ENCODE measurements at regions of chr1 and their contacts with region 1.

Region 1: GRCh38 chr1:116987256-116987555 is 14.4 kb upstream of the CD101 start:
- DNase-seq: peak; percentile 62 to 68
- H3K4me3 ChIP-seq: peak overlapping the region; percentile 40
- H3K4me3 Mint-ChIP-seq: peak overlapping the region; percentile 98
- H3K27ac Mint-ChIP-seq: peak overlapping the region; percentile 97
- H3K4me1 ChIP-seq: peaks cover 15% of the 10 kb centered on the region
- H3K4me1 Mint-ChIP-seq: peaks cover 6% of the 10 kb centered on the region
- H3K27me3 ChIP-seq: no peaks in the 10 kb centered on the region
- H3K27me3 Mint-ChIP-seq: no peaks in the 10 kb centered on the region
- CTCF ChIP-seq: no peak

Region 2: DNA sequence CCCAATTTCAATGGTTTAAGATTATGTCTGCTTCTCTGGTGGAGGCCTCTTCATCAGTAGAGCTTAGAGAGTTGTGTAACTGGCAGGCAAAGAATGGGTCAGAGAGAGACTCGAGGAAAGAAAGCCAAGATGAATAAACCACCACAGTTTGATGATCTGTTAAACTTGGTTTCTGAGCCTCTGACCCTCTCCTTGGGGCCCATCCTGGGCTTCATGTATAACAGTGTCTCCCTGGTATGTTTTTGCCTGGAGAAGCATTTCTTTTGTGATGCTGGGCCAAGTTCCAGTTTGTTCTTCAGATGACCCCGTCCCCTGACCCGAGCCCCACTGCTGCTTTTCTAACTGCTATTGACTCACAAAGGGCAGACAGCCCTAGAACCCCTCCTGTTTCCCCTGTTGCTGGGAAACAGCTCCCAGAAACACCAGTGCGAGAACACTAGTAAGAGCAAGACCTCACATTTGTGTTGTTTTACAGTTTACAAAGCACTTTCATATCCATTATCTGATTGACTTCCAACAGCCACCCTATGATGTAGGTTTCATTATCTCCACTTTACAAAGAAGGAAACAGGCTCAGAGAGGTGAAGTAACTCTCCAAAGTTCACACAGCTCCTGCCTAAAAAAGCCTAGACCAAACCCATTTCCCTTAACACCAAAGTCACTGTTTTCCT is 224.0 kb before region 1 on chr1:
- CTCF ChIA-PET with region 1: no interaction called
- POLR2A ChIA-PET with region 1: no interaction called
- intact Hi-C with region 1: no loop called
- DNase-seq: no peak
- H3K4me3 ChIP-seq: no peak overlapping the region
- H3K4me3 Mint-ChIP-seq: no peak overlapping the region
- H3K27ac Mint-ChIP-seq: no peak overlapping the region
- H3K4me1 ChIP-seq: no peaks in the 10 kb centered on the region
- H3K4me1 Mint-ChIP-seq: no peaks in the 10 kb centered on the region
- H3K27me3 ChIP-seq: no peaks in the 10 kb centered on the region
- H3K27me3 Mint-ChIP-seq: no peaks in the 10 kb centered on the region
- CTCF ChIP-seq: no peak

Region 3: GRCh38 chr1:116873680-116874271 is 113.4 kb before region 1 on chr1:
- CTCF ChIA-PET with region 1: no interaction called
- POLR2A ChIA-PET with region 1: no interaction called
- intact Hi-C with region 1: no loop called
- DNase-seq: no peak
- H3K4me3 ChIP-seq: no peak overlapping the region
- H3K4me3 Mint-ChIP-seq: no peak overlapping the region
- H3K27ac Mint-ChIP-seq: no peak overlapping the region
- H3K4me1 ChIP-seq: no peaks in the 10 kb centered on the region
- H3K4me1 Mint-ChIP-seq: no peaks in the 10 kb centered on the region
- H3K27me3 ChIP-seq: no peaks in the 10 kb centered on the region
- H3K27me3 Mint-ChIP-seq: no peaks in the 10 kb centered on the region
- CTCF ChIP-seq: no peak

Region 4: GRCh38 chr1:116934586-116935207 is 52.5 kb before region 1 on chr1:
- CTCF ChIA-PET with region 1: interaction called, 3 read pairs
- POLR2A ChIA-PET with region 1: interaction called, 3 read pairs
- intact Hi-C with region 1: loop called (anchors 5 kb)
- DNase-seq: peak in 1 of 2 experiments; percentile 20
- H3K4me3 ChIP-seq: no peak overlapping the region
- H3K4me3 Mint-ChIP-seq: no peak overlapping the region
- H3K27ac Mint-ChIP-seq: no peak overlapping the region
- H3K4me1 ChIP-seq: peaks cover 22% of the 10 kb centered on the region
- H3K4me1 Mint-ChIP-seq: peaks cover 7% of the 10 kb centered on the region
- H3K27me3 ChIP-seq: no peaks in the 10 kb centered on the region
- H3K27me3 Mint-ChIP-seq: no peaks in the 10 kb centered on the region
- CTCF ChIP-seq: peak in 1 of 2 experiments; percentile 13

Region 5: GRCh38 chr1:116971258-116971860 is 15.8 kb before region 1 on chr1:
- CTCF ChIA-PET with region 1: no interaction called
- POLR2A ChIA-PET with region 1: no interaction called
- intact Hi-C with region 1: no loop called
- DNase-seq: no peak
- H3K4me3 ChIP-seq: no peak overlapping the region
- H3K4me3 Mint-ChIP-seq: no peak overlapping the region
- H3K27ac Mint-ChIP-seq: no peak overlapping the region
- H3K4me1 ChIP-seq: no peaks in the 10 kb centered on the region
- H3K4me1 Mint-ChIP-seq: no peaks in the 10 kb centered on the region
- H3K27me3 ChIP-seq: no peaks in the 10 kb centered on the region
- H3K27me3 Mint-ChIP-seq: no peaks in the 10 kb centered on the region
- CTCF ChIP-seq: no peak

Region 6: GRCh38 chr1:117013272-117013858 is 26.2 kb after region 1 on chr1:
- CTCF ChIA-PET with region 1: no interaction called
- POLR2A ChIA-PET with region 1: interaction called, 3 read pairs
- intact Hi-C with region 1: loop called (anchors 1 kb)
- DNase-seq: peak; percentile 48 to 53
- H3K4me3 ChIP-seq: no peak overlapping the region
- H3K4me3 Mint-ChIP-seq: no peak overlapping the region
- H3K27ac Mint-ChIP-seq: no peak overlapping the region
- H3K4me1 ChIP-seq: 0 out of 2 replicates have a peak, but pooled peaks cover 7% of the 10 kb centered on the region
- H3K4me1 Mint-ChIP-seq: peaks cover 5% of the 10 kb centered on the region
- H3K27me3 ChIP-seq: no peaks in the 10 kb centered on the region
- H3K27me3 Mint-ChIP-seq: no peaks in the 10 kb centered on the region
- CTCF ChIP-seq: no peak